Calu3 (cell line): ENCODE measurements at regions of chr4 and their contacts with region 1.

Region 1: DNA sequence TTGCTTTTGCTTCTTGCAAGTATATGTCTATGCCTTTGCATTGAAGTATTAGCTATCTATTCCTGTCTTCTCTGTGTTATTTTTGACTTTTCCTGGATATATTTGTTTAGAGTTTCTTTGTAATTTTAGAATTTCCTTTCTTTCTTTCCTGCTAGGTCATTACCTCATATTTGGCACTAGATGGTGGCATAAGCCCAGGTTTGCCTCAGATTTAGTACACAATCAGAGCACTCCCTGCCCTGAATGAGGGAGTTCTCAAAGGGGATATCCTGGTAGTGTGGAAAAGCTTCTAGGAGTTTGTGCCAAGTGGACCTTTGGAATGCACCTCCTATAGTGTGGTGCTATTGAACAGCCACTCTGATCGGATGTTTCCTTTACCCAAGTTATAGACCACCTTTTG is 181.6 kb downstream of the UGT8 start:
- DNase-seq: peak; percentile 24
- H3K4me3 Mint-ChIP-seq: no peak overlapping the region
- H3K27ac Mint-ChIP-seq: no peak overlapping the region
- H3K4me1 Mint-ChIP-seq: no peaks in the 10 kb centered on the region
- H3K27me3 Mint-ChIP-seq: no peaks in the 10 kb centered on the region
- CTCF ChIP-seq: peak; percentile 33

Region 2: GRCh38 chr4:114694770-114695169 is 85.4 kb before region 1 on chr4:
- CTCF ChIA-PET with region 1: no interaction called
- intact Hi-C with region 1: no loop called
- DNase-seq: peak; percentile 1
- H3K4me3 Mint-ChIP-seq: no peak overlapping the region
- H3K27ac Mint-ChIP-seq: no peak overlapping the region
- H3K4me1 Mint-ChIP-seq: no peaks in the 10 kb centered on the region
- H3K27me3 Mint-ChIP-seq: no peaks in the 10 kb centered on the region
- CTCF ChIP-seq: peak; percentile 30

Region 3: GRCh38 chr4:115113125-115114106 is 333.2 kb after region 1 on chr4 and contains the start of gene NDST4:
- CTCF ChIA-PET with region 1: no interaction called
- intact Hi-C with region 1: loop called (anchors 10 kb)
- DNase-seq: peak; percentile 4
- H3K4me3 Mint-ChIP-seq: peak within 1 kb of the TSS; percentile 65
- H3K27ac Mint-ChIP-seq: no peak within 1 kb of the TSS
- H3K4me1 Mint-ChIP-seq: no peaks in the 10 kb centered on the region
- H3K27me3 Mint-ChIP-seq: no peaks in the 10 kb centered on the region
- CTCF ChIP-seq: no peak
- total RNA-seq, gene NDST4: not detected in 2 replicates

Region 4: DNA sequence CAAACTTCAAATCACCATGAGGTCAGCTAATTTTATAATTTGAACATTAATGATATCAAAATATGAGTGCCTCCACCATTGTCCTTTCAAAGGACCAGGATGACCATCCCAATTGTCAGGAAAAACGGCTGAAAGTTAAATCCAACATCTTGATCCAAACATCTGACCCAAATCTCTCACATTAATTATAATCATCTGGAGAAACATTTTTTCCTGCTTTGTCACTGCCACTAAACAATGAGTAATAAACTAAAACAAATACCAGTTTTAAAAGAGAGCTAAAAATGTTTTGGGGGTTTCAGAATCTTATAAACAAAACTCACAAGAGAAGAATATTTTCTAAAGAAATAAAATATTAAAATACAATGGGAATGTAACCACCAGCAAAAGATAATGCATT is 378.9 kb after region 1 on chr4:
- CTCF ChIA-PET with region 1: no interaction called
- intact Hi-C with region 1: no loop called
- DNase-seq: no peak
- H3K4me3 Mint-ChIP-seq: no peak overlapping the region
- H3K27ac Mint-ChIP-seq: no peak overlapping the region
- H3K4me1 Mint-ChIP-seq: no peaks in the 10 kb centered on the region
- H3K27me3 Mint-ChIP-seq: no peaks in the 10 kb centered on the region
- CTCF ChIP-seq: no peak

Region 5: GRCh38 chr4:115537387-115537786 is 757.2 kb after region 1 on chr4:
- CTCF ChIA-PET with region 1: no interaction called
- intact Hi-C with region 1: loop called (anchors 5 kb)
- DNase-seq: no peak
- H3K4me3 Mint-ChIP-seq: no peak overlapping the region
- H3K27ac Mint-ChIP-seq: no peak overlapping the region
- H3K4me1 Mint-ChIP-seq: no peaks in the 10 kb centered on the region
- H3K27me3 Mint-ChIP-seq: no peaks in the 10 kb centered on the region
- CTCF ChIP-seq: no peak

Region 6: DNA sequence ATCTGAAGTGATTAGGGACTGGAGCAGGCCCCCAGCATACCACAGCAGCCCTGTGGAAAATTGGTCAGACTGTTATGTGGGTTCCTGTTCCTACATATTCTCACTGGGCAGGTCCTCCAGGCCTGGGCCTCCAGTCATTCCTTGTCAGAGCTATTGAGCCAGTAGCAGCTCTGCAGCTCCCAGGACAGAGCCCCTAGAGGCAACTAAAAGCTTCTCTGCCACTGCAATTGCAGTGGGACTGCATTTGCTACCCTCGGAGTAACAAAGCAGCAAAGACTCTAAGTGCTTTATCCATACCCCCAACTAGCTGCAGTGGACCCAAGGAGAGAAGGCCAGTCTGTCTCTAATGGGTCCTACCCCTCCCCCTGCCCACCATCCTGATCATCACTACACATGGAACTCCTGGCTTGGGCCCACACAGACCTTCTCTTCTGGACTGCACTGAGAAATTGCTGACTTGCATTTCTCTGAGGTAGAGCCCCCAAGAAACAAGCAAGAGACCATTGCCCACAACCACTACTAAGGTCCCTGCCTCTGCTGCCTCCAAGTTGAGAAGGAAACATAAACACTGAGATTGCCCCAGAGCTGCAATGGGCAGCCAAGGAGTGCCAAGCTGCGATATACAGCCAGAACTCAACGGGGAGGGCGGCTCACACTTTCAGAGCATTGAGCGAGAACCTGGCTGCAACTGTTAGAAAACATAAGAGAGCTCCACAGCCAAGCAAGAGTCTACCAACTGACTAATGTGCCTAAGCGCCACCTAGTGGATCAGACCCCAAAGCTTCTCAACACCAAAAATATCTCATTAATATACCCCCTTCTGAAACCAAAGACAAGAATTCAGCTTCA is 1071.9 kb after region 1 on chr4:
- CTCF ChIA-PET with region 1: no interaction called
- intact Hi-C with region 1: loop called (anchors 2 kb)
- DNase-seq: peak; percentile 54
- H3K4me3 Mint-ChIP-seq: no peak overlapping the region
- H3K27ac Mint-ChIP-seq: no peak overlapping the region
- H3K4me1 Mint-ChIP-seq: no peaks in the 10 kb centered on the region
- H3K27me3 Mint-ChIP-seq: no peaks in the 10 kb centered on the region
- CTCF ChIP-seq: peak; percentile 19